ENCODE measurements at regions of chr20 and their contacts with region 1.

Region 1: DNA sequence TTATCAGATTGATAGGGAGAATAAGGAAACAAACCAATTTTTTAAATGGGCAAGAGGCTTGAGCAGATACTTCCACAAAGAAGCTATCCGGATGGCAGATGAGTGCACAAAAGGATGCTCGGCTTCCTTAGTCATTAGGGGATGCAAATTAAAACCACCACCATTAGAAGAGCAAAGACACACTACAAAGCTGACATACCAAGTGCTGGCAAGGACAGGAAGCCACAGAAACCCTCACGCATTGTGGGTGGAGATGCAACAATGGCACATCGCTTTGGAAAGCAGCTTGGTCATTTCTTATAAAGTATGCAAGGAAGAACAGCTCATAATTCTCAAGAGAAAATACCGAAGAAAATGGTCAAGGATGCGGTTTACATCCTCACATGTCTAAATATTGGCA is 19.8 kb downstream of the BFSP1 start:
- DNase-seq: peak; percentile 62
- ATAC-seq: peak; percentile 57
- H3K4me3 Mint-ChIP-seq: no peak overlapping the region
- H3K27ac Mint-ChIP-seq: no peak overlapping the region
- H3K4me1 Mint-ChIP-seq: peaks cover 17% of the 10 kb centered on the region
- H3K27me3 Mint-ChIP-seq: peaks cover 5% of the 10 kb centered on the region
- CTCF ChIP-seq: no peak

Region 2: DNA sequence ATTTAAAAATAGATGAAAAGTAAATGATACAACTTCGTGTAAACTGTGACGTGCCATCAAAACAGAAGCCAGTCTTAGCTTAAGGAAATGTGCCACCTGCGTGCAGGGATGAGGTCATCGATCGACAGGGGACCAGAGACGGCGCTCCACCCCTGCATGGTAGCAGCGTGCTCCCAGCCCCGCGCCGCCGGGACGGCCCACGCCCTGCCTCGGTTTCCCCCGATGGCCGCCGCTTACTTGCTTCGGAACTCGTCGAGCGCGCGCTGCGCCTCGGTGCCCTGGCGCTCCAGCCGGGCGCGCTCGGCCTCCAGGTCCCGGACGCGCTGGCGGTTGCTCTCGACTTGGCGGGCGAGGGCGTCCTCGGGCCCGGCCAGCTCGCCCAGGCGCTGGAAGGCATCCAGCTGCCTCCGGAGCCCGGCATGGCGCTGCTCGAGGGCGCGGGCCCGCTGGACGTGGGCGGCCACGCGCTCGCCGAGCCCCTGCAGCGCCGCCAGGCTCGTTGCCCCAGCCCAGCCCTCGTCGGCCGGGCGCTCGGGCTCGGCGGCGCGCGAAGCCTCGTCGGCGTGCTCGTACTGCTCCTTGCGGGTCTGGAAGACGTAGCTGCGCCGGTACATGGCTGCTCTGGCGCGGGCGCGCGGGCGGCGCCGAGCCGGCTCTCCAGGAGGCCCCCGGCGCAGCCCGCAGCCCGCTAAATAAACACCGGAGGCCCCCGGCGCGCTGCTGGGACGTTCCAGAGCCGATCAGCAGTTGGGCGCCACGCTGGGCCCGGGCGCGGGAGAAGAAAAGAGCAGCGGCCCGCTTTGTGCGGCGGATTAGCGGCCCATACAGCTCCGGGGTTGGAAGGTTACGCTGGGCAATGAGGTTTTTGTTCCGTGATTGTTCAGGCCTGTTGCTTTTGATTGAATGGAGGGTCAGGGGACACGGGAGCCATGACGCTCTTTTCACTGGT is 19.6 kb after region 1 on chr20 and contains the start of gene BFSP1:
- CTCF ChIA-PET with region 1: interaction called, 16 read pairs
- POLR2A ChIA-PET with region 1: interaction called, 3 read pairs
- intact Hi-C with region 1: no loop called
- DNase-seq: peak; percentile 68
- ATAC-seq: peak; percentile 77
- H3K4me3 Mint-ChIP-seq: peak within 1 kb of the TSS; percentile 81
- H3K27ac Mint-ChIP-seq: peak within 1 kb of the TSS; percentile 68
- H3K4me1 Mint-ChIP-seq: peaks cover 17% of the 10 kb centered on the region
- H3K27me3 Mint-ChIP-seq: peaks cover 15% of the 10 kb centered on the region
- CTCF ChIP-seq: no peak
- total RNA-seq, gene BFSP1: 0.18 TPM

Region 3: DNA sequence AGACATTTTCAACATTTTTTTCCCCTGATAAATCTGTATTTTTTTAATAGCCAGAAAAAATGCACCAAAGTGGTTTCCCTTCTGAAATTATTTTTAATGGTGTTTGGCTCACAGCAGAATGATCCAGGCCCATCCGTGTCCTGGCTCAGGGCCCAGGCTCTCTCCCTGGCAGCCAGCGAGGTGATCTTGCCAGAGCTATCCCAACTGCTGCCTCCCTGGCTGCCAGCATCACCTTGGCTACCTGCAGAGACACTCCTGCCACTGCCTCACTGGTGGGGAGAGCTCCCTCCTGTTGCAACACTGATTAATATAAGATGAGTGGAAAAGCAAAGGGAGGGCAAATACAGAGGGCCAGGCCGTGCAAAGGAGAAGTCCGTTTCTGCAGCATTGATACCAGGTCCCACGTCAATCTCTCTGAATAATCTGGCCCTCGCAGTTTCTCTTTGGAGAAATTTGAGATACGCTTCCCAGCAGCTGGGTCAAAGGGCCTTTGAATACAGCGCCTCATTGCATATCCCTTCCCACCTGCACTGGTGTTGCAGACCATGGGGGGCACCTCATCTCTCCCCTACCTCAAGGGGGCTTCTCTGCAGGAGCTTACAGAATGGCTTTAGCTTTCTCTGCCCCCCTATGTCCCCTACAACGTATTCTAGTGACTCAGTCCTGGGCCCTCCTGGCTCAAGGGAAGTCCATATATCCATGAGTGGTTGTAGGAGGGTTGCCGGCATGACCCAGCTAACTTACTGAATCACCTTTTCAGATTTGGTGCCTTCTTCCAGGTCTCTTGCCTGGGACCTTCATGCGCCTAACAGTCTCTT is 45.6 kb after region 1 on chr20:
- CTCF ChIA-PET with region 1: no interaction called
- POLR2A ChIA-PET with region 1: no interaction called
- intact Hi-C with region 1: no loop called
- DNase-seq: no peak
- ATAC-seq: no peak
- H3K4me3 Mint-ChIP-seq: no peak overlapping the region
- H3K27ac Mint-ChIP-seq: no peak overlapping the region
- H3K4me1 Mint-ChIP-seq: peaks cover 33% of the 10 kb centered on the region
- H3K27me3 Mint-ChIP-seq: no peaks in the 10 kb centered on the region
- CTCF ChIP-seq: no peak